WTC11 (cell line): ENCODE measurements at regions of chr22 and their contacts with region 1.

Region 1: GRCh38 chr22:39543095-39543494 is 10.5 kb upstream of the RPS19BP1 start:
- DNase-seq: peak; percentile 74
- ATAC-seq: peak; percentile 82
- H3K4me3 Mint-ChIP-seq: no peak overlapping the region
- H3K27ac Mint-ChIP-seq: no peak overlapping the region
- H3K4me1 Mint-ChIP-seq: peaks cover 18% of the 10 kb centered on the region
- H3K27me3 Mint-ChIP-seq: peaks cover 33% of the 10 kb centered on the region
- CTCF ChIP-seq: 0 out of 2 replicates have a peak, but pooled peaks have one; percentile 14

Region 2: DNA sequence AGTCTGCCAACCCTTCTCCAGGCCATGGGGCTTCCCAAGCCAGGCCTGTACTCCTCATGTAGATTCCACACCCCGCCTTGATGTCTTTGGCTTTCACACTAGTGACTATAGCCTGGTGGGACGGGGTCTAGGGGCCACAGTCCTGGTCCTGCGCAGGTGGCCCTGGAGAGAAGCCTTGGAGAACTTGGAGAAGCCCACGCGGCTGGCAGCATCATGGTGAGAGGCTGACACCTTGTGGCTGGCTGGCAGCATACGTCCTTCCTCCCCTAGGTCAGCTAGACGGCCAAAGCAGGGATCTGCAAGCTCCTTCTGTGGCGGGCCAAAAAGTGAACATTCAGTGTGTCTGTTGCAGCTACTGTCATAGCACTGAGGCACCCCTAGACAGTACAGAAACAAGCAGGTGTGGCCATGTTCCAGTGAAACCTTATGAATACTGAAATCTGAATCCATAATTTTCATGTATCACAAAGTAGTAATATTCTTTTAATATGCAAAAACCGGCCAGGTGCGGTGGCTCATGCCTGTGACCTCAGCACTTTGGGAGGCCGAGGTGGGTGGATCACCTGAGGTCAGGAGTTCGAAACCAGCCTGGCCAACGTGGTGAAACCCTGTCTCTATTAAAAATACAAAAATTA is 493.6 kb after region 1 on chr22:
- CTCF ChIA-PET with region 1: interaction called, 15 read pairs
- POLR2A ChIA-PET with region 1: no interaction called
- DNase-seq: peak; percentile 77
- ATAC-seq: peak; percentile 90
- H3K4me3 Mint-ChIP-seq: no peak overlapping the region
- H3K27ac Mint-ChIP-seq: no peak overlapping the region
- H3K4me1 Mint-ChIP-seq: no peaks in the 10 kb centered on the region
- H3K27me3 Mint-ChIP-seq: peaks cover 14% of the 10 kb centered on the region
- CTCF ChIP-seq: peak; percentile 57